Aorta (tissue), 5 donors: ENCODE measurements at regions of chr12 and their contacts with region 1.

Region 1: DNA sequence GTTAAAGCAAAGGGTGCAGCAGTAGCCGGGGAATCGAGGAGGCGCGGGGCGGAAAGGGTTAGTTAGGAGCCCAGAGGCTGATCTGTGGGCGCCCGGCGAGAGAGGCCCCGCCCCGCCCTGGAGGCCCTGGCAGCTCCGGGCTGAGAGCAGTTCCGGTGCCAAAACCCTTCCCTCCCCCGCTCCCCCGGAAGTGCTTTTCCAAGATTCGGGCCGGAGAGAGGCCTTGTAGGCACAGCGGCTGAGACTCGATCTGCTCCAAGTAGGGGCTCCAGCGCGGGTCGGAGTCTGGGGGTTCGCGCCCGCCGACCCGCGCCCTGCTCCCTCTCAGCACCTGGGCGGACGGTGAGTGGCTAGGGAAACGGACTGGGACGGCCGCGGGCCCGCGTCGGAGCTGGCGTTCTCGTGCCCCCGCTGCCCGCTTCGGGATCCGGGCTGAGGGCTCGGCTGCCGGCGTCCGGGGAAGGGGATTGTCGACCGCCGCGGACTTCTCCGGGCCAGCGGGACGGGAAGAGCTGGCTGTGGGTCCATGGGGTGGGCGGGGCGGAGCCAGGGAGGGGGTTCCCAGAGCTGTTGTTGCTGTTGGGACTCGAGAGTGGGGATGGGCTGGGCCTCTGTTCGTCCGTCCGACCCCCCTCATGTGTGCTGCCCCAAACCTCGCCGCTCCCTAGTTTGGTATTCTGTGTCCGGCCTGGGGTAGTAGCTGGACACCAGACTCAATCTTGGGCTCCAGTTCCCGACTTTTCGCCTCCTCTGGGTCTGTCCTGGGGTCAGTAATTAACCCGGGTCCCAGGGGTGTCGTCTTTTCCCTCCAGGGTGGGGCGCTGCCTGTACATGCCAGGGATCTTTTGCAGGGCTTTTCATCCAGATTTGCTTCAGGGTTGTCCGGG is at the start of gene FRS2:
- DNase-seq: peak; percentile 95 to 97
- ATAC-seq: peak; percentile 97
- H3K4me3 ChIP-seq: peak within 1 kb of the TSS; percentile 94 to 97
- H3K27ac ChIP-seq: peak within 1 kb of the TSS; percentile 88 to 99
- H3K4me1 ChIP-seq: peaks cover 4 to 14% of the 10 kb centered on the region in 2 donors
- H3K27me3 ChIP-seq: no peaks in the 10 kb centered on the region
- total RNA-seq, gene FRS2: 38.3 to 44.5 TPM

Region 2: DNA sequence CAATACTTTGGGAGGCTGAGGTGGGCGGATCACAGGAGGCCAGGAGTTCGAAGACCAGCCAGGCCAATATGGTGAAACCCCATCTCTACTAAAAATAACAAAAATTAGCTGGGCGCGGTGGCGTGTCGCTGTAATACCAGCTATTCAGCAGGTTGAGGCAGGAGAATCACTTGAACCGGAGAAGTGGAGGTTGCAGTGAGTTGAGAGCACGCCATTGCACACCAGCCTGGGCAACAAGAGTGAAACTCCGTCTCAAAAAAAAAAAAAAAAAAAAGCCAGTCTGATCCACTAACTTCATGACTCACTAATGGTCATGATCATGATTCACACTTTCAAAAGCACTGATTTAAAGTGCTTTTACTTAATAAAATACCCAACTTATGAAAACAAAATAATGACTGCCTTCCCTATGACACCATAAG is 499.1 kb before region 1 on chr12:
- intact Hi-C with region 1: no loop called
- DNase-seq: no peak
- ATAC-seq: no peak
- H3K4me3 ChIP-seq: no peak overlapping the region
- H3K27ac ChIP-seq: no peak overlapping the region
- H3K4me1 ChIP-seq: no peaks in the 10 kb centered on the region
- H3K27me3 ChIP-seq: no peaks in the 10 kb centered on the region

Region 3: DNA sequence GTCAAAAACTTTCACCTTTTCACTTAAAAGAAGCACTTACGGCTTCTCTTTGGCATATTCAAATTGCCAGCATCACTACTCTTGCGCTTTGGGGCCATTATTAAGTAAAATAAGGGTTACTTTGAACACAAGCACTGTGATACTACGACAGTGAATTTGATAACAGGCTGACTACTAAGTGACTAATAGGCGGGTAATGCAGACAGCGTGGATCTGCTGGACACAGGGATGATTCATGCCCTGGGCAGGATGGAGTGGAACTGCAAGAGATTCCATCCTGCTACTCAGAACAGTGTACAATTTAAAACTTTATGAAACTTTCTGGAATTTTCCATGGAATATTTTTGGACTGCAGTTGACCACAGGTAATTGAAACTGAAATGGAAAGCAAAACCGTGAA is 65.0 kb before region 1 on chr12:
- intact Hi-C with region 1: loop called in 1 of 2 experiments (anchors 5 kb)
- DNase-seq: peak; percentile 72 to 75
- ATAC-seq: peak; percentile 64
- H3K4me3 ChIP-seq: no peak overlapping the region
- H3K27ac ChIP-seq: no peak overlapping the region
- H3K4me1 ChIP-seq: peaks cover 0 to 2% of the 10 kb centered on the region in 2 donors
- H3K27me3 ChIP-seq: no peaks in the 10 kb centered on the region

Region 4: GRCh38 chr12:69534389-69534822 is 64.0 kb after region 1 on chr12:
- intact Hi-C with region 1: loop called (anchors 5 to 10 kb)
- DNase-seq: peak in 1 of 2 donors; percentile 82
- ATAC-seq: peak; percentile 96
- H3K4me3 ChIP-seq: no peak overlapping the region
- H3K27ac ChIP-seq: peak overlapping the region in 1 of 2 donors; percentile 44
- H3K4me1 ChIP-seq: no peaks in the 10 kb centered on the region
- H3K27me3 ChIP-seq: no peaks in the 10 kb centered on the region